ENCODE measurements at regions of chr15 and their contacts with region 1.

Region 1: DNA sequence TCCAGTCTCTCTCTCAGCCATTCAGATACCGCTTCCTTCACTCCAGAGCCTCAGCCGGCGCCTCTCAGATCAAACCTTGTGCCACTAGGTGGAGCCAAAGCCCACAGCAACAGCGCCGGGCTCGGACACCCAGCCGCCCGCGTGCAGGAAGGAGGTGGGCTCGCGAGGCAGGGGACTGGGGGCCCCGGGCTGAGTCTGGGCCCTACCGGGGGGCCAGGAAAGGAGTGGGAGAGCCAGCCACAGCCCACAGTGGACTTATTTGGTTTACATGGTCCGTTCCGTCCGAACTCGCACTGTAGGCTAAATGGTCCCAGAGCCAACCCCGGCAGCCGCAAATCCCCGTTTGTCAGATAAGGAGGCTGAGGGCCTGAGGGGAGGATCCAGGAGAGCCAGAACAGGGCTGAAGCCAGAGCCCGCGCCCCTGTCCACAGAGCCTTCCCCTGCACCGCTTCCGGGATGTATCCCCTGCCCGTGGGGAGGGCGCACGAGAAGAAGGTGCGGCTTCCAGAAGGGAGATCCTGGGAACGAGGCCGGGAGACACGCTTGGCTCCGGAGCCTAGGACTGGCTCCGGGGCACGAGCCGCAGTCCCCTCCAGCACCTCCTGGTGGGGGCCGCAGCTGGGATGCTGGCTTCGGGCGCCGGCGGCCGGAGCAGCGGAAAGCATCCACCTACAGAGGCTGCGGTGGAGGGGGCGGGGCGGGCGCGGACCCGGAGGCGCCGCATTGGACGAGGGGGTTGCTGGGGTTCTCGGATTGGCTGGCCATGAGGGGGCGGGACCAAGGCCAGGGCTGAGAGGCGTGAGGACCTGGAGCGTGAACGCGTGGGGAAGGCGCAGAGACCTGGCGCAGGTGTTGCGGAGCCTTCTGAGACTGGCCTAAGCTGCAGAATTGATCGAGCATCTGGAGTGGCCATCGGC is 6.5 kb upstream of the CYP11A1 start:
- DNase-seq: peak; percentile 84
- H3K4me3 ChIP-seq: peak overlapping the region; percentile 37 to 41 (median 40)
- H3K27ac ChIP-seq: no peak overlapping the region
- H3K4me1 ChIP-seq: peaks cover 11% of the 10 kb centered on the region
- H3K27me3 ChIP-seq: peaks cover 14 to 25% of the 10 kb centered on the region in 2 experiments
- CTCF ChIP-seq: peak; percentile 79 to 84
- POLR2A ChIP-seq: no peak

Region 2: DNA sequence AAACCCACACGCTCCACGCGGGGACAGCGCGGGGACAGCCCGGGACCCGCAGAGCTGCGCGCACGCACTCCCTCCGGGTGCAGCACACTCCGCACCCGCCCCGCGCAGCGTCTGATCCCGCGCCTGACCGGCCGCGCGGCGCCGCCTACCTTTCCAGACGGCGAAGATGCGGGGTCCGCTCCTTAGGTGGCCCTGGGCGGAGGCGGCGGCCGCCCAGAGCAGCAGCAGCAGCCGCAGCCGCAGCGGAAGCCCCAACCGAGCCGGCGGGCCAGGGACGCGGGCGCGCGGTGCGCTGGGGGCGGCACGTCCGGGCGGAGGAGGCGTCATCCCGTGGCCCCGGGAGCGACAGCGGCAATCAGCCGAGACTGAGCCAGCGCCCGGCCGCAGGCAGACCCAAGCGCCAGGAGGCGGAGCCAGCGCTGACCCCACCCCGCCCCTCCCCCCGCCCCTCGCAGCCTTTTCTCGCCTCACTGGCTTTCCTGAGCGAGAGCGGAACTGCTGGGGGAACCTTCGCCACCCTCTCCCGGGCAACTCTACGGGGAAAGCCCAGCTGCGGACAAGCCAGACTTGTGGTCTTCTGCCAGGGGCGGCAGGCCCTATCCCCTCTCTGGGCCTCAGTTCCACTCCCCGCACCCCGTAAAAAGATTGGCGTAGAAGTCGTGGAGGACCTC is 59.7 kb after region 1 on chr15 and contains the start of gene SEMA7A:
- CTCF ChIA-PET with region 1: interaction called, 313 read pairs
- POLR2A ChIA-PET with region 1: interaction called, 3 read pairs
- dilution Hi-C with region 1: no loop called
- intact Hi-C with region 1: loop called (anchors 1 kb)
- DNase-seq: peak; percentile 70
- H3K4me3 ChIP-seq: peak within 1 kb of the TSS; percentile 32 to 63 (median 47)
- H3K27ac ChIP-seq: no peak within 1 kb of the TSS
- H3K4me1 ChIP-seq: no peaks in the 10 kb centered on the region
- H3K27me3 ChIP-seq: peaks cover 26 to 30% of the 10 kb centered on the region in 2 experiments
- CTCF ChIP-seq: no peak
- POLR2A ChIP-seq: peak; percentile 38
- total RNA-seq, gene SEMA7A: 1.3 and 1.7 TPM in 2 replicates

Region 3: DNA sequence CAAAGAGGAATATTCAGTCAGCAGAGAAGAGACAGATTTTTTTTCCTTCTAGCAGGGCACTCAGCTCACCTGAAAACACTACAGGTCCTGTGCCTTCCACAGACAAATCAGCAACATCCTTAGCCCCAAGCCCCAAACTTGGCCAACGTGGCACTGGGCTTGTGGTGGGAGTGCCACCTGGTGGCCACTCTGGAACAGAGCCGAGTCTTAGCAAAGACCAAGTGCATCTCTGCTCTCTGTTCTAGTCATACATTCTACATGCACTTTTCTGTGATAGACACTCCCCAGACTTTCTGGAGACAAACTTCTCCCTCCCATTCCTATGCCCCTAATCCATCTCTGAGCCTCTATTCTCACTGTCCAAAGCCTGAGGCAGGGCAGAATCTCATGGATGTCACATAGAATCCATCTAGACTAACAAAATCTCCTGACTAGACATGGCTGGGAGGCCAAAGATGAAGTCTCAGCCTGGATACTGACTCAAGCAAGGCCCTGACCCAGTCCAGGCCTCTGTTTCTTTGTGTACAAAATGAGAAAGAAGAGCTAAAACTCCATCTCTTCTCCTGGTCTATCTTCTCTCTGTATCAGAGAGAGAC is 64.8 kb after region 1 on chr15:
- CTCF ChIA-PET with region 1: interaction called, 313 read pairs
- POLR2A ChIA-PET with region 1: no interaction called
- dilution Hi-C with region 1: no loop called
- intact Hi-C with region 1: loop called (anchors 1 kb)
- DNase-seq: peak; percentile 65
- H3K4me3 ChIP-seq: no peak overlapping the region
- H3K27ac ChIP-seq: no peak overlapping the region
- H3K4me1 ChIP-seq: no peaks in the 10 kb centered on the region
- H3K27me3 ChIP-seq: no peaks in the 10 kb centered on the region
- CTCF ChIP-seq: peak; percentile 90 to 95
- POLR2A ChIP-seq: no peak

Region 4: GRCh38 chr15:74489518-74490338 is 115.7 kb after region 1 on chr15:
- CTCF ChIA-PET with region 1: interaction called, 5 read pairs
- POLR2A ChIA-PET with region 1: interaction called, 5 read pairs
- dilution Hi-C with region 1: no loop called
- intact Hi-C with region 1: loop called (anchors 1 kb)
- DNase-seq: peak; percentile 44
- H3K4me3 ChIP-seq: no peak overlapping the region
- H3K27ac ChIP-seq: no peak overlapping the region
- H3K4me1 ChIP-seq: peaks cover 4% of the 10 kb centered on the region
- H3K27me3 ChIP-seq: no peaks in the 10 kb centered on the region
- CTCF ChIP-seq: peak; percentile 44 to 77
- POLR2A ChIP-seq: no peak

Region 5: DNA sequence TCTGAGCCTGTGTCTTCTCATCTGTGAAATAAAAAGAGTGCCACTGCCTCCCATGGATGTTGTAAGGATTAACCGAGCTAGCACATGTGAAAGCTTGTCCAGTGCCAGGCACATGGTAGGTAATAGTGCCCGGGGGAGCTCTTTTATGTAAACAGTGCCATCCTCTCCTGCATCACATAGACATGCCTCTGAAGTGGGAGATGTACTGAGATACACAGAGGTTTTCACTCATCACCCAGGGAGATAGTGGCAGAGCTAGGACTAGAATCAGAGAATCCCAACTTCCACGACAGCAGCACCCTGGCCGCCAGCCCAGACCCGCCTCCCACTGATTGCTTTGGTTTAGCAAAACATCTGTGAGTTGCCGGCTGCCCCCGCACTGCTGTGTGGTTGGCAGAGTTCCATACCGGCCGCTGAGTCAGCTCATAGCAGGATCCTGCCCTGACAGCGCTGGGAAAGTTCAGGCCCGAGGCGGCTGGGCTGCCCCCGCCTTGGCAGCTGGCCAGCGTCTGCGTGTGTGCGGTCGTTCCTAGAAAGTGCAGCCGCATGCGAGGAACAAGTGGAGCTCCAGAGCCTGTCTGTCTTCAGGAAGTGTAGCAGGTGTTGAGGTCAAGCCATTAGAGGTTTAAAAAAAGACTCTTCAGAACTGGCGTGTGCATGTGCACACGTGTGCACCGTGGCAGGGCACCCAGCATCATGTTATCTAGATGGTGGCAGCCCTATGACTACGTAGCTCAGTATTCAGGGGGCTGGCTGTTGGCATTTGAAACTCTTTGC is 172.1 kb after region 1 on chr15:
- CTCF ChIA-PET with region 1: no interaction called
- POLR2A ChIA-PET with region 1: no interaction called
- dilution Hi-C with region 1: no loop called
- intact Hi-C with region 1: loop called (anchors 1 kb)
- DNase-seq: peak; percentile 99
- H3K4me3 ChIP-seq: no peak overlapping the region
- H3K27ac ChIP-seq: no peak overlapping the region
- H3K4me1 ChIP-seq: peaks cover 19% of the 10 kb centered on the region
- H3K27me3 ChIP-seq: no peaks in the 10 kb centered on the region
- CTCF ChIP-seq: no peak
- POLR2A ChIP-seq: peak; percentile 39

Region 6: GRCh38 chr15:74620636-74621545 is 246.9 kb after region 1 on chr15:
- CTCF ChIA-PET with region 1: interaction called, 8 read pairs
- POLR2A ChIA-PET with region 1: no interaction called
- dilution Hi-C with region 1: no loop called
- intact Hi-C with region 1: loop called (anchors 1 kb)
- DNase-seq: peak; percentile 72
- H3K4me3 ChIP-seq: no peak overlapping the region
- H3K27ac ChIP-seq: no peak overlapping the region
- H3K4me1 ChIP-seq: peaks cover 9% of the 10 kb centered on the region
- H3K27me3 ChIP-seq: no peaks in the 10 kb centered on the region
- CTCF ChIP-seq: peak; percentile 99
- POLR2A ChIP-seq: peak; percentile 21

Region 7: DNA sequence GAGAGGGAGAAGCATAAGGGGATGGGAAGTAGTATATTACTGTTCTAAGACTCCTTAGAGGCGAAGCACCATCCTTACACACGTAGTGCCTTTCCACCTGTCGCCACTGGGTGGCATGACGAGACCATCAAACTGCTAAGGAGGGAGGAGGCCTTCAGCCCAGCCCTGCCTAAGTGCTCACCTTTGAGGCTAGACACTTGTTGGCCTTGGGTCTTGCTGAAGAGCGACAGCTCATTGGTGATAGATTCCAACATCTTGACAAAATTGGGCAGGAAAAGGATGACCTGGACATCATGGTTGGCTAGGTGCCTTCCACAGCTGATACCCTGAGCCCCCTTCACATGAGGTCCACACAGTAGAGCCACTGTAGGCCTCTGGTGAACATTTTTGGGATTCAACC is 261.2 kb after region 1 on chr15:
- CTCF ChIA-PET with region 1: interaction called, 20 read pairs
- POLR2A ChIA-PET with region 1: no interaction called
- dilution Hi-C with region 1: no loop called
- intact Hi-C with region 1: loop called (anchors 1 kb)
- DNase-seq: peak; percentile 76
- H3K4me3 ChIP-seq: no peak overlapping the region
- H3K27ac ChIP-seq: no peak overlapping the region
- H3K4me1 ChIP-seq: no peaks in the 10 kb centered on the region
- H3K27me3 ChIP-seq: no peaks in the 10 kb centered on the region
- CTCF ChIP-seq: peak; percentile 82 to 89
- POLR2A ChIP-seq: no peak

Measured in endothelial cell of umbilical vein (primary cell).